Activated CD4-positive, alpha-beta T cell treated with anti-CD3 and anti-CD28 coated beads for 36 hours (primary cell): ENCODE measurements at regions of chr19 and their contacts with region 1.

Region 1: GRCh38 chr19:57583521-57584416 is at the start of gene ZIK1:
- DNase-seq: peak; percentile 90
- ATAC-seq: peak; percentile 87
- H3K4me3 Mint-ChIP-seq: peak within 1 kb of the TSS; percentile 81
- H3K27ac Mint-ChIP-seq: peak within 1 kb of the TSS; percentile 85
- H3K4me1 Mint-ChIP-seq: peaks cover 21% of the 10 kb centered on the region
- H3K27me3 Mint-ChIP-seq: no peaks in the 10 kb centered on the region
- total RNA-seq, gene ZIK1: 4.6 to 5.3 TPM

Region 2: GRCh38 chr19:57599761-57600383 is 16.1 kb after region 1 on chr19 and contains the start of gene ZNF530:
- CTCF ChIA-PET with region 1: no interaction called
- POLR2A ChIA-PET with region 1: no interaction called
- intact Hi-C with region 1: loop called (anchors 1 kb)
- DNase-seq: peak; percentile 95
- ATAC-seq: peak; percentile 98
- H3K4me3 Mint-ChIP-seq: peak within 1 kb of the TSS; percentile 81
- H3K27ac Mint-ChIP-seq: peak within 1 kb of the TSS; percentile 79
- H3K4me1 Mint-ChIP-seq: peaks cover 12% of the 10 kb centered on the region
- H3K27me3 Mint-ChIP-seq: no peaks in the 10 kb centered on the region
- total RNA-seq, gene ZNF530: 7.1 to 7.2 TPM

Region 3: DNA sequence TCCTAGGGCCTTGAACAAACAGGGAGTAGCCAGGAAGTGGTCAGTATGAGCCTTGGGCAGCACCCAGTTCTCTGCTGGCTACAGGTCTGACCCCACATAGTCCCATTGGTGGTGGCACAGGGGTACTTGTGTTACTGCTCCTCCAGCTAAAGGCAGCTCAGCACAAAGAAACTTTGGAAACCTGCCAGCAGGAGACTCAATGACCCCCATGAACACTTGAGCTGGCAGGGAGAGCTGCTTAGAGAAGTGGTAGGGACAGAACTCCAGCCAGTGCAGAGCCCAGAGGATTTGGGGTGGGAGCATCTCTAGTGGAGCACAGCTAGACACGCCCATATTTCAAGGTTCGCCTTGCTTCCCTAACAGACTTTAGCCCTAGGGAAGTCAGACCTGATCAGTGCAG is 175.3 kb after region 1 on chr19:
- CTCF ChIA-PET with region 1: no interaction called
- POLR2A ChIA-PET with region 1: no interaction called
- intact Hi-C with region 1: no loop called
- DNase-seq: no peak
- ATAC-seq: no peak
- H3K4me3 Mint-ChIP-seq: no peak overlapping the region
- H3K27ac Mint-ChIP-seq: no peak overlapping the region
- H3K4me1 Mint-ChIP-seq: no peaks in the 10 kb centered on the region
- H3K27me3 Mint-ChIP-seq: no peaks in the 10 kb centered on the region